ENCODE measurements at regions of chr11 and their contacts with region 1.

Region 1: DNA sequence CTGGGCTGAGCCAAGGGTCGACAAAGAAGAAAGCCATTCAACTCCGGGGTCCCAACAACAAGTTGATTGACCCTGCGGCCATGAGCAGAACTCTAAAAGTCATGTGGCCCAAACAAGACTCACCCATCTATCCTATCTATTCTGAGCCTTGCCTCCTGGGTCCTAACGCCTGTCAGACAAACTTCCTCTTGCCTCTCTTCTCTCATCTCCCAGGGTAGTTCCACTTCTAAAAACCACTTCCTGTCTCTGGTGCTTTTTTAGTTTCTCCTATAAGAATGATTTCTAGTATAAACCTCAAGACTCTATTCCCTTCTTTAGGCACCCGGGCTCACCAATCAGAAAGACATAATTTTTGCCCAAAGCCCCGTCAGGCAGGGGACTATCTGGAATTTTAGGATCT is 530.2 kb downstream of the DLG2 start:
- DNase-seq: no peak
- ATAC-seq: no peak
- H3K4me3 ChIP-seq: no peak overlapping the region
- H3K27ac ChIP-seq: no peak overlapping the region
- H3K4me1 ChIP-seq: no peaks in the 10 kb centered on the region
- H3K27me3 ChIP-seq: no peaks in the 10 kb centered on the region

Region 2: DNA sequence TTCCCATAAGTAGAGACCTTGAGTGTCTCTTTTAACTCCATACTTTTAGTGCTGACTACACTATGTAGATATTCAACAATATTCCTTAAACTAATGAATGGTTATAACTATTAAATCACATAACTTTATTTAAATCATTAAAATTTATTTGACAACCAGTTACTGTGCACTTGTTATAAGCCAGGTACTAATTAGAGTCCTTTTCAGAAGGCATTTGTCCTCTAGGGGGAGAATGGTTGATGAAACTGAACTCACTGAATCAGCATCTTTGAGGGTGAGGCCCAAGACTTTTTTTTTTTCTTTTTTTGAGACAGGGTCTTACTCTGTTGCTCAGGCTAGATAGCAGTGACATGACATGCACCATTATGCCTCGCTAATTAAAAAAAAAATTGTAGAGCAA is 1295.2 kb before region 1 on chr11:
- intact Hi-C with region 1: no loop called
- DNase-seq: no peak
- ATAC-seq: no peak
- H3K4me3 ChIP-seq: no peak overlapping the region
- H3K27ac ChIP-seq: no peak overlapping the region
- H3K4me1 ChIP-seq: no peaks in the 10 kb centered on the region
- H3K27me3 ChIP-seq: no peaks in the 10 kb centered on the region

Region 3: DNA sequence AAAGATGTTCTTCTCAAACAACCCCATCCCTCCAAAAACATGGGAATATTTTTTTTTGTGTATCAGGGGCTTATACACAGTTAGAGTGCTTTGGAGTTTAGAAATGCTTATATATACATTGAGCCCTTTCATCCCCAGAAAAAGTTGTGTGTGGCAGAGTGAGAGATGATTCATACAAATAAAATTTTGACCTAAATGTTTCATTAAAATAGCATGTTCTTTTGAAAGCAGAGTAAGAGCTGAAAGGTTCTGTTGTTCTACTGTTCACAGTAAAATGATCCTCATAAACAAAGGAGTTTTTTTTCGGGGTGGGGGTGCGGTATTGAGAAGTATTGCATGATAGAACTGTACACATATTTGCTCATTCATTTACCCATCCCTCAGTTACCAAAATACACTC is 17.8 kb after region 1 on chr11:
- intact Hi-C with region 1: loop called in 1 of 2 experiments (anchors 1 kb)
- DNase-seq: no peak
- ATAC-seq: no peak
- H3K4me3 ChIP-seq: no peak overlapping the region
- H3K27ac ChIP-seq: no peak overlapping the region
- H3K4me1 ChIP-seq: no peaks in the 10 kb centered on the region
- H3K27me3 ChIP-seq: no peaks in the 10 kb centered on the region

Measured in aorta (tissue), 5 donors.